ENCODE measurements at regions of chr7 and their contacts with region 1.

Region 1: DNA sequence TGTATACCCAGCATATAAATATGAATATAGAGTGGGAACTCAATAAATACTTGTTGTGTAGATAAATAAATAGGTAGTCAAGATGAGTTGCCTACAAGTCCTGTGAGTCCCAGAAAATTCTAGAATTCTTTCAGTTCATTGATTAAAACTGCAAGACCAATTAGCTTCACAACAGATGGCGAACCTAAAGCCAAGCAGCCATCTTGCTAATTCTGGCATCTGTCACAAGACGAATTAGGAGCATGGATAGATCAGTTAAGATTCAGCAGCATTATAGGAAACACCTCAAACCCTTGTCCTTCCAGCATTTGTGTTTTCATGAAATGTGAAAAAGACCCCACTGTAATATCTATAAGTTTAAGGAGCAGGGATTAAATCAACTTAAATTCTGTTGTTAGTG is 552.7 kb downstream of the MAGI2 start:
- DNase-seq: no peak
- H3K4me3 ChIP-seq: no peak overlapping the region
- H3K27ac ChIP-seq: no peak overlapping the region
- H3K4me1 ChIP-seq: no peaks in the 10 kb centered on the region
- H3K27me3 ChIP-seq: no peaks in the 10 kb centered on the region
- CTCF ChIP-seq: no peak
- POLR2A ChIP-seq: no peak

Region 2: DNA sequence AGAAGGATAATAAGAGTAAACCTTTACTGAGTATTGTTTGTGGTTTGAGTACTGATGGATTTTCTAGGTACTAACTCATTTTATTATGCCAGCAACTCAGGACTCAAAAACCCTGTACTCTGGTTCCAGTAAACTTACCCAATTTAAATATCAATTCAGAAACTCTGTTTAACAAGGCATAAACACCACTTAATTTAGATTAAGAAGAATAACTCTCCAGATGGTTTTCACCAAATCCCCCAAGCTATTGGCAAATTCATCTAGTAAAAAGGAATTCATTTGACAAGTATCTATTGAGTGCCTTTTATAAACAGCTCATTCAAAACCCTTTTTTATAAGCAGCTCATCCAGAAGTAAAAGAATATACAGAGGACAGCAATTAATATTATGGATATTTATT is 529.9 kb before region 1 on chr7:
- intact Hi-C with region 1: loop called (anchors 5 kb)
- DNase-seq: no peak
- H3K4me3 ChIP-seq: no peak overlapping the region
- H3K27ac ChIP-seq: no peak overlapping the region
- H3K4me1 ChIP-seq: no peaks in the 10 kb centered on the region
- H3K27me3 ChIP-seq: no peaks in the 10 kb centered on the region
- CTCF ChIP-seq: no peak
- POLR2A ChIP-seq: no peak

Region 3: GRCh38 chr7:78702770-78703169 is 198.0 kb before region 1 on chr7:
- intact Hi-C with region 1: no loop called
- DNase-seq: no peak
- H3K4me3 ChIP-seq: no peak overlapping the region
- H3K27ac ChIP-seq: no peak overlapping the region
- H3K4me1 ChIP-seq: no peaks in the 10 kb centered on the region
- H3K27me3 ChIP-seq: no peaks in the 10 kb centered on the region
- CTCF ChIP-seq: no peak
- POLR2A ChIP-seq: no peak

Measured in breast epithelium (tissue), 4 donors.